Activated T-helper 2 cell treated with anti-CD3 and anti-CD28 coated beads, Interferon-gamma antibody, Interleukin-2, Interleukin-4, amounts not matched to agents 10 μg/mL and 5 μg/mL and 100 μg/mL, durations not matched to agents 14 hours and 24 hours and 36 hours (primary cell): ENCODE measurements at regions of chr13 and their contacts with region 1.

Region 1: DNA sequence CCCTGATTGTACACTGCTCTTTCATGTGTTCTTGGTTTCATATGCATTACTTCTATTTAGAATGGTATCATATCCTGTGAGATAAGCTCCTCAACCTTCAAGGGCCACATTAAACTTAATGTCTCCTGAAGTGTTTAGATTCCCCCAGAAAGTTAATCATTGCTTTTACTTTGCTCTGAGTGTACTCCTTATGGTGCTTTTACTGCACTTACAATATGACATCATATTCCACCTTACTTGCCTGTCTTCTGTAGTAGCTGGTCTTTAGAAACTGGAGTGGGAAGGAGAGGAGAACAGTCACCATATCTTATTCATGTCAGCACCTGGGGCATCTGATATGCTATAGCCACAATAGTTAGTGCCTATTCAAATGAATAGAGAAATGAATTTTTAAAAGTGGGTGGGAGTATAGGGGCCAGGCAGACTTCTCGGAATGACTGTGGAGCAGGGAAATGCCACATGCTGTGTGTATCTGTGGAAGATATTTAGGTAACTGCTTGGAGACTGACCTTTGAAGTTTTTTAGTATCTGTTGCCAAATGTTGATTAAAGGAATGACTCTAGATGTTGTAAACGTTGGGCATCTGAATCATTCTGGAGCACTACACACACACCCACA is 40.2 kb downstream of the SLAIN1 start:
- DNase-seq: no peak
- H3K4me3 Mint-ChIP-seq: no peak overlapping the region
- H3K27ac Mint-ChIP-seq: no peak overlapping the region
- H3K4me1 Mint-ChIP-seq: peaks cover 21% of the 10 kb centered on the region
- H3K27me3 Mint-ChIP-seq: no peaks in the 10 kb centered on the region

Region 2: GRCh38 chr13:77653301-77653700 is 84.4 kb before region 1 on chr13:
- intact Hi-C with region 1: no loop called
- DNase-seq: no peak
- H3K4me3 Mint-ChIP-seq: no peak overlapping the region
- H3K27ac Mint-ChIP-seq: no peak overlapping the region
- H3K4me1 Mint-ChIP-seq: no peaks in the 10 kb centered on the region
- H3K27me3 Mint-ChIP-seq: peaks cover 4% of the 10 kb centered on the region

Region 3: GRCh38 chr13:77687799-77688198 is 49.9 kb before region 1 on chr13:
- intact Hi-C with region 1: no loop called
- DNase-seq: no peak
- H3K4me3 Mint-ChIP-seq: no peak overlapping the region
- H3K27ac Mint-ChIP-seq: no peak overlapping the region
- H3K4me1 Mint-ChIP-seq: no peaks in the 10 kb centered on the region
- H3K27me3 Mint-ChIP-seq: peaks cover 42% of the 10 kb centered on the region

Region 4: DNA sequence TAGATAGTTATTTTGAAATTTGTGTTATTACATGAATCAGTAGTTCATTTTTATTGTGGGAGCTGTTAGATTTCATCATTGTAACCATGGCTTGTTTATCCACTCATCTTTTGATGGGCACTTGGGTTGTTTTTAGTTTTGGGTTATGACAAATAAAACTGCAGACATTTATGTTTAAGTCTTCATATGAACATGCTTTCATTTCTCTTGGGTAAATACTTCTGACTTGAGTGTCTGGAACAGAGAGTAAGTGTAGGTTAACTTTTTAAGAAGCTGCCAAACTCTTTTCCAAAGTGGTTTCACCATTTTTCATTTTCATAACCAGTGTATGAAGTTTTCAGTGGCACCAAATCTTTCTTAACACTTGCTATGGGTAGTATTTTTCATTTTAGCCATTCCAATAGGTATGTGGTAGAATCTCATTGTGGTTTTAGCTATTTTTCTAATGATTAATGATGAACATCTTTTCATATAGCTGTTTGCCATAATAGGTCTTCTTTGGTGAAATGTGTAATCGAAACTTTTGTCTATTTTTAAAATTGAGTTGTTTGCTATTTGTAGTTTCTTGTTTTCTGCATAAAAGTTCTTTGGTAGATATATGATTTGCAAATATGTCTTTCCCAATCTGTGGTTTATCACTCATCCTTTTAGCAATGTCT is 22.3 kb before region 1 on chr13:
- intact Hi-C with region 1: loop called (anchors 1 kb)
- DNase-seq: no peak
- H3K4me3 Mint-ChIP-seq: no peak overlapping the region
- H3K27ac Mint-ChIP-seq: peak overlapping the region; percentile 30
- H3K4me1 Mint-ChIP-seq: peaks cover 24% of the 10 kb centered on the region
- H3K27me3 Mint-ChIP-seq: no peaks in the 10 kb centered on the region

Region 5: DNA sequence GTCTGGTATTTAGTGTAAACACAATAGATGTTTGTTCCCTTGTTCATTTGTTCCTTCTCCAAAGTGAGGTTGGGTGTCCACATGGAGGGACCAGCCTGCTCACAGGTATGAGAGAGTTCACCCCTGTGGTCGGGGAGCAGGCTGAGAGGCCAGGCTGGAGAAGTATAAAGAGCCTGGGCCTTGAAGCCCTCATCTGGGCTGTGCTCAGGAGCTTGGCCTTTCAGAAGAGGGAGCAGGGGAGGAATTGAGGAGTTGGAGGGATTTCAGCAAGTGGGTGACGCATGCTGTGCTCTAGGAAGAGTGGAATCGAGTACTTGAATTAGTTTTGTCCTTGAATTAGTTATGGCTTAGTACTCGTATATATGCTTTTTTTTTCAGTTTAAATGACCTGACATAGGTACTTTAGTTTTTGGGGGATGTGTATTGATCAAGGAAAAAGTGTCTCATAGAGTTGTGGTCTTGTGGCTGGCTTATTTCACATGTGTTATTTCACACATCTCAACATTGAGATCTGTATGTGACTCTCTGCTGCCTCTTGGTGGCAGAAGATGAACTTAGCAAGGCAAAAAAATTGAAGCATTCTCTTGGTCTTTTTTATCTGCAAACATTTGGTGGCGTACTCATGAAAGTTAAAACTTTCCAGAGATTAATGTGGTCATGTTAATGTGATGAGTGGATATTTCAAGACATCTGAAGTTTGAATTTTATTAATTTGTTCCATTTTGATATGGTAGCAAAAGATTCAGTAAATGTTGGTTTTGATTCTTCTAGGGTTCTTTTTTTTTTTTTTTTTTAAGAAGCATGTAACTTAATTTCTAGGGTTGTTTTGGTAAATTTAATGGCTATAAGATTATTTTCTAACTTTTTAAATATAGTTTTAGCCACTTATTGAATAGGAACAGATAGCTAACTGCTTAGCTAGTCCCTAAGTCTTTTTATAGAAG is 14.1 kb after region 1 on chr13:
- intact Hi-C with region 1: loop called (anchors 2 kb)
- DNase-seq: peak; percentile 23
- H3K4me3 Mint-ChIP-seq: no peak overlapping the region
- H3K27ac Mint-ChIP-seq: no peak overlapping the region
- H3K4me1 Mint-ChIP-seq: peaks cover 18% of the 10 kb centered on the region
- H3K27me3 Mint-ChIP-seq: no peaks in the 10 kb centered on the region

Region 6: DNA sequence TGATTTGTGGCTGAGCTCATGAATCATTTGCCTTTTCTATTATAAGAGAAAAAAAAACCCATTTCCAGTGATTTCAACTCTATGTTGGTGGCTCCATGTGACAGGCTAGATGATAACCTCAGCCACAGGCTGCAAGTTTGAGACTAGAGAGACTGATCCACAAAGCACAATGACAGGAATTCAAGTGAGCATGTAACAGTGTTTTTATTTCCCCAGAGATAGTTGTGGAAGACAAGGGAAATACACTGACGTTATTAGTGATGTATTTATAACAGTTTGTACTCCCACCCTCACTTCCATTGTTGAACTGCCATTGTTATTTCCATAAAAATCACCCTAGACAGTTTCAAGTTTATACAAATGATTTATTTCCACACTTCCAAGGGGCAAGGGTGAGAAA is 208.8 kb after region 1 on chr13:
- intact Hi-C with region 1: no loop called
- DNase-seq: no peak
- H3K4me3 Mint-ChIP-seq: no peak overlapping the region
- H3K27ac Mint-ChIP-seq: no peak overlapping the region
- H3K4me1 Mint-ChIP-seq: no peaks in the 10 kb centered on the region
- H3K27me3 Mint-ChIP-seq: peaks cover 4% of the 10 kb centered on the region

Region 7: DNA sequence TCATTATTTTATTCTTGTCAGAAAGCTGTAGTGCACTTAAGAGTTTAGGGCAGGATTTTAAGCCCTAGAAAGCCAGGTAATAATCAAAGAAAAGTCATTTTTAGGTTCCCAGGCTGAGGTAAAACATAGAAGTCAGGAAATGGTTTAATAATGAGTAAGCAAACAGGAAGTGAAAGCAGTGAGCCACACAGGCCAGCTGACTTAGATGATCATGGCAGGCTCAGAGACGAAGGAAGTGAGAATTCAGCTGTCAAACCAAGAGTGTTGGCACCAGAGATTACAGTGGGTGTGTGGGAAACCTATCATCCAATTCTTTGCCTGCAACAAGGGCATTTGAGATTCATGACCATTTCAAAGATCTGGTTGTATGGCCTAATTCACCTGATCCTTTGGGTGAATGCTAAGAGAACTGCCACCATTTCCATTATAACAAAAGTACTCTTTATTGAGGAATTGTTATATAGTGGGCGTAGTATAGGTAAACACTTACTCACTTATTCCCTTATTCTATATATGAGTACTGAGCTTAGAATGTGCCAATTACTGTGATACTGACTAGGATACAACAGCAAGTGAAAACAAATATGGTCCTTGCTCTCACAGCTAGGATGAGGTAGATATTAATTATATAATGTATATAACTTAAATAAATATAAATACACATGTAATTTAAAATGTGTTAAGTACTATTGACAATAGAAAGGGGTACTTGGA is 284.6 kb after region 1 on chr13:
- intact Hi-C with region 1: loop called (anchors 1 kb)
- DNase-seq: peak; percentile 32
- H3K4me3 Mint-ChIP-seq: no peak overlapping the region
- H3K27ac Mint-ChIP-seq: no peak overlapping the region
- H3K4me1 Mint-ChIP-seq: peaks cover 10% of the 10 kb centered on the region
- H3K27me3 Mint-ChIP-seq: no peaks in the 10 kb centered on the region